ENCODE measurements at regions of chrX and their contacts with region 1.

Region 1: DNA sequence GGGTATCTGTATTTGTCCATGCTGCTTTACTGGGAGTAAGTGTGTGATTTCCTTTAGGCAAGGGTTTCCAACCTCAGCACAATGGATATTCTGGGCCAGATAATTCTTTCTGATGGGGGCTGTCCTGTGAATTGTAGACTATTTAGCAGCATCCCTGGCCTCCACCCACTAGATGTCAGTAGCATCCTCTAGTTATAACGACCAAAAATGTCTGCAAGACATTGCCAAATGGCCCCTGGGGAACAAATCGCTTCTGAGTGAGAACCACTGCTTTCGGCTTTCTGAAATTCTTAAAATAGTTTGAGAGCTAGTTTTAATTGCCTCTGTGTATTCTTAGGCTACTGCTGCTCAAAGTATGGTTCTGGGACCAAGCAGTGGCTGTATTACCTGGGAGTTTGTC is 81.2 kb upstream of the GPM6B start:
- DNase-seq: peak; percentile 62
- H3K4me3 Mint-ChIP-seq: no peak overlapping the region
- H3K27ac Mint-ChIP-seq: peak overlapping the region; percentile 83
- H3K4me1 Mint-ChIP-seq: peaks cover 34% of the 10 kb centered on the region
- H3K27me3 Mint-ChIP-seq: peaks cover 13% of the 10 kb centered on the region
- CTCF ChIP-seq: no peak

Region 2: GRCh38 chrX:13653022-13653693 is 244.9 kb before region 1 on chrX and contains the start of gene TCEANC:
- CTCF ChIA-PET with region 1: no interaction called
- POLR2A ChIA-PET with region 1: interaction called, 3 read pairs
- intact Hi-C with region 1: loop called (anchors 10 kb)
- DNase-seq: peak; percentile 98
- H3K4me3 Mint-ChIP-seq: peak within 1 kb of the TSS; percentile 89
- H3K27ac Mint-ChIP-seq: peak within 1 kb of the TSS; percentile 59
- H3K4me1 Mint-ChIP-seq: peaks cover 5% of the 10 kb centered on the region
- H3K27me3 Mint-ChIP-seq: peaks cover 20% of the 10 kb centered on the region
- CTCF ChIP-seq: no peak
- total RNA-seq, gene TCEANC: 4.0 TPM in 2 replicates

Region 3: DNA sequence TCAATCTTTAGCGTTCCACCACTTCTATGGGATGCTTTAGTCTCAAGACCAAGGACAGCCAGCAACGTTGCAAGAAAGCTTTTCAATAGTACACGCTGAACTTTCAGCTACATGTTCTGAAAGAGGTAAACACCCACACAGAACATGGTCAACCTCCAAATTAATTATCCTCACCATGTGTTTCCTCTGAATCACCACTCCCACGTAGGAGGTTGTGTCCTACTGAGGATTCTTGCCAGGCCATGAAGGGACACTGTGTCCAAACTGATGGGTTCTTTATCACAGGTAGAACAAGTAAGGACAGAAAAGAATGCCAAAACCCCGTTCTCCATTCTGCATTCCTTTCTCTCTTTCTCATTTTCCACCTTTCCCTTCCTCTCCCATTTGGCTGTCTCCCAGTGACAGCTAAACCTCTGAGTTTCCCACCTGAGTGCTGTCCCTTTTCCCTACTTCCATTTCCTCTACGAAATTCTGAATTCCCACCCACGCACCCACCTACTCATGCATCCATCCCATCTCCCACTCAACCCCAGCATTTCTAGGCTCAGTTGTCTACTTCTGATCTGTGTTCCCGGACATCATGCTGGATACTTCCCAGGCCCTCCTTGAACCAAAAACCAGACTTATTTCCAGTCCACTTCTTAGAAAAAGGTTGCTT is 52.2 kb before region 1 on chrX:
- CTCF ChIA-PET with region 1: interaction called, 5 read pairs
- POLR2A ChIA-PET with region 1: interaction called, 16 read pairs
- intact Hi-C with region 1: no loop called
- DNase-seq: peak; percentile 95
- H3K4me3 Mint-ChIP-seq: no peak overlapping the region
- H3K27ac Mint-ChIP-seq: peak overlapping the region; percentile 43
- H3K4me1 Mint-ChIP-seq: peaks cover 7% of the 10 kb centered on the region
- H3K27me3 Mint-ChIP-seq: peaks cover 48% of the 10 kb centered on the region
- CTCF ChIP-seq: no peak

Region 4: DNA sequence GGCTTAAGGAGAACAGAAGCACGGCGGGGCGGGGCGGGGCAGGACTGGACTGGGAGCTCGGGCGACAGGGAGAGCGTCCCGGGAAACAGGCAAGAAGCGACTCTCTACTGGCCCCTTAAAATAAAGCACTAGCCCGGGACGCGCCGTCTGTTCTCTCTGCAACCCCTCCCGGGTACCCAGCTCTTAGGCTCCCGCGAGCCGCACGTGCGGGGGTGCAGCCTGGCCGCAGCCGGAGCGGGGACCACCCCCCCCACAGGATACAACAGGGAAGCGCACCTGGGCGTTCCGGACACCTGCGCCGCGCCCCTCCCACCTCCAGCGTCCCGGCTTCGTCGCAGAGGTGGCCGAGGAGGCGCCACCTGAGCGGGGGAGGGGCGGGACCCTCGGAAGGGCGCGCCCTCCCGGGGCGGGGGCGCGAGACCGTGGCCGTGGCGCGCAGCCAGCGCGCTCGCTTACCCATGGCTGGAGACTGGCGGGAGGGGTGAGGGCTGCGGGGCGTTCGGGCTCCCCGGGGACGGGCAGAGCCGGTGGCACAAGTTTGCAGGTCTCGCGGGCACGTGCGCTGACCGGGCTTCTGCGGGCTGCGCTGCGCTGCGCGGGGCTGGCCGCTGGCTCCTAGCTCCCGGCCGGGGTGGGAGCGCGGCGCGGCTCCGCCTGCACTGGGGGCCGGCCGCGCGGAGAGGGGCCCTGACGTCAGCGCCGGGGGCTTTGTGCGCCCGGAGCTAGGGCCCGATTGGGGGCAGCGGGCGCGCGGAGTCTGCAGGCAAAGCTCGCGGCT is 40.2 kb after region 1 on chrX:
- CTCF ChIA-PET with region 1: interaction called, 3 read pairs
- POLR2A ChIA-PET with region 1: interaction called, 18 read pairs
- intact Hi-C with region 1: loop called (anchors 5 kb)
- DNase-seq: peak; percentile 40
- H3K4me3 Mint-ChIP-seq: peak overlapping the region; percentile 81
- H3K27ac Mint-ChIP-seq: peak overlapping the region; percentile 79
- H3K4me1 Mint-ChIP-seq: peaks cover 5% of the 10 kb centered on the region
- H3K27me3 Mint-ChIP-seq: peaks cover 56% of the 10 kb centered on the region
- CTCF ChIP-seq: no peak